Cardiac septum (tissue), 1 donor: ENCODE measurements at regions of chr20 and their contacts with region 1.

Region 1: DNA sequence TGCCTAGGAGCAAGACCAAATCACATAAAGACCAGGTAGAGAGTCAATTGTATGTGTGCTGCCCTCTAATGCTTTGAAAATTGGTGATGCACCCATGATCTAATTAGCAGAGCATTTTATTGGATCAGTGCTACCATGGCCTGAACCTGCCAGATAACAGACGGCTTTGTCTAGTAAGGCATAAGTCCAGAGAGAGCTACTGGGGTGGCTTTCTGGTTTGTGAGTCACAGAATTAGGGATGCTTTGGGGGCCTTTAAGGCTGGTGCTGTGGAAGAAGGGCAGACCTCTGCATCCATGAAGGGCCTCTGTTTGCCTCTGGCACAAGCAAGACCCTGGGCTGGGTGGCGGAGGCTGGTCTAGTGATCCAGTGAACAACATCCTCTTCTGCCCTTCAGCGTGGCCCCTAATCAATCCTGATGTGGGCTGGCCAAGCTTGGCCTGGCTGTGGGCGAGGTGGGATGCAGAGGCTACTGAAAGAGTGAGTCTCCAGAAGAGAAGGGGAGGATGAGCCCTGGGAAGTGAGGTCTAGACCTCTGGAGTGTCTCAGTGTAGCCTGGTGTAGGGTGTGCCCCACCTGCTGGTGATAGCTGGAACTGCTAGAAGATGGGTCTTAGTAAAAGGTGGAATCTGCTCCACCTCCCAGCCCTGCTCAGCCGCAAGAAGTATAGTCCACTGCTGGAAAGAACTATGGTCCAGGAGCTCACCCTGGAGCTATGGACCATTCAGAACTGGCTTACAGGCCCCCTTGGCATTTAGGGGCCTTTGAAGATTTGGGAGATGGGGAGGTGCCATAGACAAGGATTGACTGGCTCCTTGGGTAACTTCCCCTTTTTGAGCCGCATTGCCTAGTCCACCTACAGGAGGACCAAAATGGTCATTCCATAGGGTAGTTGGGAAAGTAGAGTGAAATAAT is 36.7 kb upstream of the AAR2 start:
- DNase-seq: peak; percentile 84

Region 2: DNA sequence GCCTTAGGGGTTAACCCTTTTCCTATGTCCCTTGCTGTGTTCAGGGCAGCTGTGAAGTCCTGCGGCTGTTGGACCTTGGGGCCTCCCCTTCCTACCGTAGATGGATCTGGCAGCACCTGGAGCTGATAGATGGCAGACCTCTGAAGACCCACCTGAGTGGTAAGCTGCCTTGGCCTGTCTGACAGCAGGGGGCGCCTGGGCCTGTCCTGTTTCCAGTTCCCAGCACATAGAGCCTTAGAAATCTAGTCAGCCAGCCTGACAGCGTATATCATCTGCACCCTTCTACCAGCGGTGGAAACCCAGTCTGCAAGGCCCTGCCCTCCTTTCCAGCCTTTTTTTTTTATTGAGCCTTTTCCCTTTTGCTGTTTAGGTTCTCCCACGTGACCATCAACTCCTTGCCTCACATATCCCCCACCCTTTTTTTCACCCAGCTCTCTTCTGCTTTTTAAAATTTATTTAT is 204.6 kb before region 1 on chr20:
- intact Hi-C with region 1: loop called (anchors 2 kb)
- DNase-seq: peak; percentile 88

Region 3: DNA sequence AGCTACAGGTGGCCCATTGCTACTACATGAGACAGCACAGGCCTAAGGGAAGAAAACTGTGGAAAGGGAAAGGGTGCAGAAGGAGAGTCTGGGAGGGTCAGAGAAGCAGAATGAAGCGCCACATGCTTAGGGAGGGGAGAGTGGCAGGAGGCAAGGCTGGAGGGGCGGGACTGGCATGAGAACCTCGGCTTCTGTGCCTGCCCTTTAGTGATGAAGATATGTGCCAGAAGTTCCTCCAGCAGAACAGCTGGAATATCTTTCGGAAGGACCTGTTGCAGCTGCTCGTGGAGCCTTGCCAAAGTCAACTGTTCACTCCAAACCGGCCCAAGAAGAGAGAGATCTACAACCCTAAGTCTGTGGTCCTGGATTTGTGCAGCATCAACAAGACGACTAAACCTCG is 169.5 kb before region 1 on chr20:
- intact Hi-C with region 1: no loop called
- DNase-seq: no peak

Region 4: GRCh38 chr20:36128463-36129159 is 71.0 kb before region 1 on chr20:
- intact Hi-C with region 1: no loop called
- DNase-seq: no peak

Region 5: GRCh38 chr20:36144336-36144735 is 55.3 kb before region 1 on chr20:
- intact Hi-C with region 1: loop called (anchors 5 kb)
- DNase-seq: no peak

Region 6: GRCh38 chr20:36155991-36156390 is 43.6 kb before region 1 on chr20:
- intact Hi-C with region 1: loop called (anchors 1 kb)
- DNase-seq: no peak

Region 7: GRCh38 chr20:36439731-36440072 is 240.1 kb after region 1 on chr20:
- intact Hi-C with region 1: loop called (anchors 5 kb)
- DNase-seq: no peak

Region 8: GRCh38 chr20:36856691-36857635 is 657.4 kb after region 1 on chr20:
- intact Hi-C with region 1: no loop called
- DNase-seq: no peak